Adrenal gland (tissue), 19 donors: ENCODE measurements at regions of chr12 and their contacts with region 1.

Region 1: DNA sequence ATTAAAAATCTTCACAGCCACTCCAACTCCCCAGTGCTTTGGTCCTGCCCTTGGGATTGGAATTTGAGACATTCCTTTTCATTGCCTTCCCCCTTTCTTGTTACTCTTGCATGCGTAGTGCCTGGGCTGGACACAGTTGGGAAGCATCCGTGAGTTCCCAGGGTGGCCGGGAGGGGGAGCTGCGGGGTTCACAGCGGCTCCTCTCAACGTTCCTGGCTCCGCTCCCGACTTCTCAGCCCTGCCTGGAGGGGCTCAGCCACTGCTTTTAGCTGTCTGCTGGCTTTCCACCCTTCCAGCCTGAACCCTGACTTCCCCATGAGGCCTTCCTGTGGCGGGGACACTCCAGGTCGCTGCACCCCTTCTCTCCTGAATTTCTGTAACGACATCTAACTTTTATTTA is 3.2 kb downstream of the TEX52 start:
- DNase-seq: peak; percentile 72 to 92 (median 81)
- H3K4me3 ChIP-seq: no peak overlapping the region
- H3K27ac ChIP-seq: no peak overlapping the region
- H3K4me1 ChIP-seq: no peaks in the 10 kb centered on the region
- H3K27me3 ChIP-seq: no peaks in the 10 kb centered on the region
- CTCF ChIP-seq: peak; percentile 59 to 81 (median 70)
- POLR2A ChIP-seq: no peak

Region 2: GRCh38 chr12:2944401-2945047 is 90.9 kb after region 1 on chr12:
- intact Hi-C with region 1: loop called in 1 of 2 experiments (anchors 10 kb)
- DNase-seq: peak in 6 of 7 donors; percentile 35 to 81 (median 58)
- H3K4me3 ChIP-seq: no peak overlapping the region
- H3K27ac ChIP-seq: no peak overlapping the region
- H3K4me1 ChIP-seq: peaks cover 0 to 8% of the 10 kb centered on the region in 2 donors
- H3K27me3 ChIP-seq: no peaks in the 10 kb centered on the region
- CTCF ChIP-seq: peak; percentile 54 to 82 (median 75)
- POLR2A ChIP-seq: no peak

Region 3: DNA sequence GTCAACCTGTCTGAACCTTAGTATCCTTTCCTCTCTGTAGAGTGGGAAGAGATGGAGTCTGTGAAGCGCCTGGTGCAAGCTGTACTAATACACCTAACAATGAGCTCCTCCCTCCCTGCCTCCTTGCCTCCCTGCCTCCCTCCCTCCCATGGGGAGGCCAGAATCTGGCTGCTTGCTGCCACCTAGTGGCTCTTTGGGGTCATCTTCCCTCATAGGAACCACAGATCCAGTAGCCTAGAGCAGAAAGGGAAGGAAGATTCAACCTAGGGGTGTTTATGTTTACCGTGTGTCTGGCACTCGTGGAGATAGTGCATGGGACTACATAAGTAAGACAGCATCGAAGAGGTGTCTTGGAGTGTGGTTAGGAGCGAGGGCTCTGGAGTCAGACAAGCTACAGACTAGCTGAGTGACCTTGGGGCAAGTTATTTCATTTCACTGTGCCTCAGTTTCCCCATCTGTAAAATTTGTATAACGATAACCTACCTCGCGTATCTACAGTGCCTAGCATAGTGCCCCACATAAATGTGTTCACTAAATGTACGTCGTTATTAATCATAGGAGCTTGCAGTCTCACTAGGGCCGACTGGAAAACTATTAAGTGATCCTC is 188.0 kb after region 1 on chr12:
- intact Hi-C with region 1: loop called in 1 of 2 experiments (anchors 10 kb)
- DNase-seq: peak; percentile 48 to 78 (median 58)
- H3K4me3 ChIP-seq: no peak overlapping the region
- H3K27ac ChIP-seq: no peak overlapping the region
- H3K4me1 ChIP-seq: no peaks in the 10 kb centered on the region
- H3K27me3 ChIP-seq: no peaks in the 10 kb centered on the region
- CTCF ChIP-seq: peak; percentile 17 to 58 (median 43)
- POLR2A ChIP-seq: no peak

Region 4: GRCh38 chr12:3200032-3200617 is 346.5 kb after region 1 on chr12:
- intact Hi-C with region 1: no loop called
- DNase-seq: peak; percentile 43 to 64 (median 50)
- H3K4me3 ChIP-seq: peak overlapping the region in 2 of 4 donors; percentile 7 to 53
- H3K27ac ChIP-seq: no peak overlapping the region
- H3K4me1 ChIP-seq: peaks cover 16 to 24% of the 10 kb centered on the region in 2 donors
- H3K27me3 ChIP-seq: no peaks in the 10 kb centered on the region
- CTCF ChIP-seq: no peak
- POLR2A ChIP-seq: no peak